ENCODE measurements at regions of chr17 and their contacts with region 1.

Region 1: DNA sequence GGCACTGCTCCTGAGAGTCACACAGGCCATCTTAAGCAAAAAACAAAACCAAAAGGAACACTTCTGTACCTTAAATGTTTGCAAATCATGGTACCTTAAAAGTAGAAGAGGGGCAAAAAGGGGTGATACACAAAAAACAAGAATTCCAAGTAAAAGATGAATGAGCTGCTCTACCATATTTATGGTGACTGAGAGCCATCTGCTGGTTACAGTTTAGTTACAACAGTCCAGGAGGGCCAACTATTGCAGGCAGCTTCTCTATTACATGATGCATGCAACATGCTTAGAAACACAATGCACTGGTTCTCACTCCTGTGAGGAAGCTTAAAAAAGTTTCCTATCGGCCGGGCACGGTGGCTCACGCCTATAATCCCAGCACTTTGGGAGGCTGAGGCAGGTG is 53.5 kb downstream of the STX8 start:
- DNase-seq: no peak
- ATAC-seq: no peak
- H3K4me3 Mint-ChIP-seq: no peak overlapping the region
- H3K27ac Mint-ChIP-seq: no peak overlapping the region
- H3K4me1 Mint-ChIP-seq: no peaks in the 10 kb centered on the region
- H3K27me3 Mint-ChIP-seq: no peaks in the 10 kb centered on the region
- CTCF ChIP-seq: no peak

Region 2: DNA sequence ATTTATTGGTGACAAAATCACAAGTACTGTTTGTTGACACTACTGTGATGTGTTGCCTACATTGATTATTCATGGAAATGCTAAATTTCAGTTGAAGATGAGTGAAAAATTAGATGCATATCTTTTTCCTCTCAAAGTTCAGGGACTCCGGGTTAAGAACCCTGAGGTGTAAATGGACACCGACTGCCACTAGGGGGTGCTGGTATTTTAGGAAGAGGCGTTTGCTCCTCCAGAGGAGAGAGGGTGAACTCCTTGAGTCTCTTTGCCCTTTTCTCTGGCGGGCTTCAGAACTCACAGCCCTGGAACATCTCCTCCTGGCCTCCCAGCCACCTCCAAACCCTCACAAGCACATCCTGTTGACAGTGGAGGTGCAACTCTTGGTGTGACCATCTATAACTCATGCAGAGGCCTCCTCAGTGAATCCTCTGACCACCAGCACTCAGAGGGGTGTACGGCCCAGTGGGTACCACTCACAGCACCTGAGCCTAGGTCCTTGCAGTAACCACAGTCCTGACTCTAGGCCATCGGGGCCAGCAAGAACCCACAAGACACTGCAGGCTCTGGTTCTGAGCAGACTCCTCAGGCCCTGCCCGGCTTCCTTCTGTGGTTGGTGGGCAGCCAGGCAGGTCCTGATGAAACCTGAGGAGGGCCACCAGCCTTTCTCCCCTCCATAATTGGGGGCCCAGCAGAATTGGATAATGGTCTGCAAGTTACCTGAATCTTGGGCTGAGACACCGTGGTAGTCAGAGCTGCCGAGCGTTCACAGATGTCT is 530.4 kb before region 1 on chr17:
- CTCF ChIA-PET with region 1: no interaction called
- POLR2A ChIA-PET with region 1: no interaction called
- intact Hi-C with region 1: loop called (anchors 5 kb)
- DNase-seq: no peak
- ATAC-seq: peak; percentile 53
- H3K4me3 Mint-ChIP-seq: no peak overlapping the region
- H3K27ac Mint-ChIP-seq: no peak overlapping the region
- H3K4me1 Mint-ChIP-seq: peaks cover 2% of the 10 kb centered on the region
- H3K27me3 Mint-ChIP-seq: peaks cover 2% of the 10 kb centered on the region
- CTCF ChIP-seq: peak; percentile 66

Region 3: GRCh38 chr17:9115446-9116191 is 406.5 kb before region 1 on chr17:
- CTCF ChIA-PET with region 1: no interaction called
- POLR2A ChIA-PET with region 1: no interaction called
- intact Hi-C with region 1: loop called (anchors 10 kb)
- DNase-seq: peak; percentile 23
- ATAC-seq: peak; percentile 73
- H3K4me3 Mint-ChIP-seq: peak overlapping the region; percentile 57
- H3K27ac Mint-ChIP-seq: no peak overlapping the region
- H3K4me1 Mint-ChIP-seq: peaks cover 8% of the 10 kb centered on the region
- H3K27me3 Mint-ChIP-seq: peaks cover 21% of the 10 kb centered on the region
- CTCF ChIP-seq: no peak

Region 4: GRCh38 chr17:9414471-9414870 is 107.6 kb before region 1 on chr17:
- CTCF ChIA-PET with region 1: no interaction called
- POLR2A ChIA-PET with region 1: no interaction called
- intact Hi-C with region 1: no loop called
- DNase-seq: no peak
- ATAC-seq: peak; percentile 47
- H3K4me3 Mint-ChIP-seq: no peak overlapping the region
- H3K27ac Mint-ChIP-seq: no peak overlapping the region
- H3K4me1 Mint-ChIP-seq: peaks cover 21% of the 10 kb centered on the region
- H3K27me3 Mint-ChIP-seq: no peaks in the 10 kb centered on the region
- CTCF ChIP-seq: no peak

Region 5: DNA sequence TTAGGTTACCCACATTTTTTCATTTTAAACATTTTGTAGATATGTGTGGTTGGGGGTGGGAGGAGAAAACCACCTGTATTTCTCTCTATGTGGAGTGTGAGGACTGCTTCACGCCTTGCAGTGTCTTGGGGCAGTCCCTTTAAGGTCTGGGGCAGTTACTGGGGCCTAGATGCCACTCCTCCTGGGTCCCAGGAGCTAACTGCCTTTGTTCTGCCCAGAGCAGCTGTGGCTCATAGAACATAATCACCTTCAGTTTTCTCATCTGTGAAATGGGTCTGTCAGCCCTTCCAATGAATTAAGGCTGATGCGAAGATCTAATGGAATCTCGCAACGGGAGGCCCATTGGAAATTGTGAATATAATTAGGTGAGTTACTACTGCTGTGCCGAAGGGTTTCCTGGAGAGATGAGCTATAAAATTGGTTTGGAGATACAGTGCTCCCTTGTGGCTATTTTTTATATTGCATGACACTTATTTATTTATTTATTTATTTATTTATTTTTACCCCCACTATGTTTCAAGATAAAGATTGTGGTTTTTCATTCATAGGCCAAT is 246.4 kb after region 1 on chr17:
- CTCF ChIA-PET with region 1: no interaction called
- POLR2A ChIA-PET with region 1: no interaction called
- intact Hi-C with region 1: no loop called
- DNase-seq: no peak
- ATAC-seq: no peak
- H3K4me3 Mint-ChIP-seq: no peak overlapping the region
- H3K27ac Mint-ChIP-seq: no peak overlapping the region
- H3K4me1 Mint-ChIP-seq: no peaks in the 10 kb centered on the region
- H3K27me3 Mint-ChIP-seq: peaks cover 2% of the 10 kb centered on the region
- CTCF ChIP-seq: no peak

Measured in activated B cell treated with CpG ODN at 0.5 μM for 24 hours (primary cell).